ENCODE measurements at regions of chr1 and their contacts with region 1.

Region 1: DNA sequence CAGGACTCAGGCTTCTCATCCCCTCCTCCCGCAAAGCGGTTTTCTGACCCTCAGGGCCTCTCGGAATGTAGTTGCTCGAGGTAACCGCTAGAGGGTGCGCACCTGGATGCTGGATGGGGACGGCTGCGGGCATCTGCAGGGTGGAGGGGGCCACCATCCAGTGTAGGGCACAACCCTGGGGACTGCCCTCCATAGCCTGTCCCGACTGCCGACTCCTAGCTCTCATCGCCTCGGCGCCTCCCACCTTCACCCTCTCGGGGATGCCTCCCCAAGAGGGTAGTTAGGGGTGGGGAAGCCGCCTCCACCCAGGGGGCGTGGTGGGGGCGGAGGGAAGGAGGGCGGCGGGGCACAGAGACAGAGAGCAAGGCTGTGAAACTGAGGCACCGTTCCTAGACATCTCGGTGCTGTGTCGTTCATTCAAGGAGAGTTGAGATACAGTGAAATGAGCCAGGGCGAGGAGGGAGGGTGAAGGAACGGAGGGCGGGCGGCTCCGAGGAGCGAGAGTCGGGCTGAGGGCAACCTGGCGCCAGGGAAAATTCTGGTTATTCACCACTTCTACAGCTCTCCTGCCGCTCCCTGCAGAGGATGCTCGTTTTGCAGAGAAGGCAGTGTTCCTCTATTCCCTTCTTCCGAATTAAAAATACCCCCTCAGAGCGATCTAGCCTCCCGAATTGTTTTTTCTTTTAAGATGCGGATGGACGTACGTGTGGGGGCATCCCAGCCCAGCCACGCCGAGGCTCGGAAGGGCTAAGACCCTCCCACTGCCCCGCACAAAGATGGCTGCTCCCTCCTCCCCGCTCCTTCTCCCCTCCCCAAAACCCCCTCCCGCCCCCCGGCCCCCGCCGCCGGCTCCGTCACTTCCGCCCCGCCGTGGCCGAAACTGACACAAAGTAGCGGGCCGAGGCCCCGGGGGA is at the start of gene ATP8B2:
- DNase-seq: peak; percentile 69 to 83
- ATAC-seq: peak; percentile 76 to 84 (median 81)
- H3K4me3 ChIP-seq: peak within 1 kb of the TSS; percentile 64
- H3K27ac ChIP-seq: peak within 1 kb of the TSS; percentile 54
- H3K4me1 ChIP-seq: peaks cover 22% of the 10 kb centered on the region
- H3K27me3 ChIP-seq: peaks cover 0 to 46% (median 6%) of the 10 kb centered on the region in 3 donors
- CTCF ChIP-seq: peak; percentile 84
- total RNA-seq, gene ATP8B2: 3.6 to 5.8 (median 4.0) TPM

Region 2: GRCh38 chr1:154386643-154387352 is 61.9 kb after region 1 on chr1:
- intact Hi-C with region 1: loop called in 1 of 2 experiments (anchors 5 kb)
- DNase-seq: no peak
- ATAC-seq: peak in 1 of 4 donors; percentile 16
- H3K4me3 ChIP-seq: no peak overlapping the region
- H3K27ac ChIP-seq: no peak overlapping the region
- H3K4me1 ChIP-seq: no peaks in the 10 kb centered on the region
- H3K27me3 ChIP-seq: peaks cover 0 to 3% (median 0%) of the 10 kb centered on the region in 3 donors
- CTCF ChIP-seq: no peak

Region 3: DNA sequence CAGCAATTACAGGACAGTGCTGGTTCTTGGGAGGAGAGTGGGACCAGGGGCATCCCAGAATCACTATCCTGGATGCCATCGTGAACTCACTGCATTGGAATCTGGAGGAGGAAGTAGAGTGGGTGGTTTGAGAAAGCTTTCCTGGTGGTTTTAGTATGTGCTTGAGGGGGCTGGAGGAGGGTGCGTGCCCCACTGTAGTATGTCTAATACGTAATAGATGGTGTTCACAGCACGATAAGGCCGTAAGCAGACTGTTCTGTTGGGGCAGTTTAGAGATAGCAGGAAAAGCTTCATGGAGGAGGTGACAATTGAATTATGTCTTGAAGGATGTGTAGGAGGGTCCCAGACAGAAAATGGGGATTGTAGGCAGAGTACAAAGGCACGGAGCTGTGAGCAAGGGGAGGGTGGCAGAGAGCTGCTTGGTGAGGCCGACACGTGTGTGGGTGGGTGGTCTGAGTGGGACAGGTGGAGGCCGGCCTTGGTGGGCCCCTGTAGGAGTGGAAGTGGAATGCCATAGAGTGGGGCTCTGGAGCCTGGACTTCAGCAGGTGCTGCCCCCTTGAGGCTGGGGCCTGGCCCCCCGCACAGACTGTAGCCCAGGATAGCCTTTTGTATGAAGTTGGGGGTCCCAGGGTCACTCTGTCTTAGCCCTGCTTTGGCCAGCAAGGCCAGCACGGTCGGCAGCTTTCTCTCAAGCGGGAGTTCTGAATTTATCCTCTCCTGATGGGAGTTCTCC is 117.2 kb after region 1 on chr1:
- intact Hi-C with region 1: loop called in 1 of 2 experiments (anchors 10 kb)
- DNase-seq: no peak
- ATAC-seq: peak; percentile 30 to 39 (median 36)
- H3K4me3 ChIP-seq: no peak overlapping the region
- H3K27ac ChIP-seq: no peak overlapping the region
- H3K4me1 ChIP-seq: peaks cover 28% of the 10 kb centered on the region
- H3K27me3 ChIP-seq: no peaks in the 10 kb centered on the region
- CTCF ChIP-seq: peak; percentile 30

Region 4: GRCh38 chr1:154546264-154547063 is 221.5 kb after region 1 on chr1:
- intact Hi-C with region 1: loop called in 1 of 2 experiments (anchors 10 kb)
- DNase-seq: peak; percentile 44 to 57
- ATAC-seq: peak; percentile 76 to 89 (median 86)
- H3K4me3 ChIP-seq: no peak overlapping the region
- H3K27ac ChIP-seq: no peak overlapping the region
- H3K4me1 ChIP-seq: no peaks in the 10 kb centered on the region
- H3K27me3 ChIP-seq: peaks cover 0 to 3% (median 0%) of the 10 kb centered on the region in 3 donors
- CTCF ChIP-seq: peak; percentile 82

Region 5: DNA sequence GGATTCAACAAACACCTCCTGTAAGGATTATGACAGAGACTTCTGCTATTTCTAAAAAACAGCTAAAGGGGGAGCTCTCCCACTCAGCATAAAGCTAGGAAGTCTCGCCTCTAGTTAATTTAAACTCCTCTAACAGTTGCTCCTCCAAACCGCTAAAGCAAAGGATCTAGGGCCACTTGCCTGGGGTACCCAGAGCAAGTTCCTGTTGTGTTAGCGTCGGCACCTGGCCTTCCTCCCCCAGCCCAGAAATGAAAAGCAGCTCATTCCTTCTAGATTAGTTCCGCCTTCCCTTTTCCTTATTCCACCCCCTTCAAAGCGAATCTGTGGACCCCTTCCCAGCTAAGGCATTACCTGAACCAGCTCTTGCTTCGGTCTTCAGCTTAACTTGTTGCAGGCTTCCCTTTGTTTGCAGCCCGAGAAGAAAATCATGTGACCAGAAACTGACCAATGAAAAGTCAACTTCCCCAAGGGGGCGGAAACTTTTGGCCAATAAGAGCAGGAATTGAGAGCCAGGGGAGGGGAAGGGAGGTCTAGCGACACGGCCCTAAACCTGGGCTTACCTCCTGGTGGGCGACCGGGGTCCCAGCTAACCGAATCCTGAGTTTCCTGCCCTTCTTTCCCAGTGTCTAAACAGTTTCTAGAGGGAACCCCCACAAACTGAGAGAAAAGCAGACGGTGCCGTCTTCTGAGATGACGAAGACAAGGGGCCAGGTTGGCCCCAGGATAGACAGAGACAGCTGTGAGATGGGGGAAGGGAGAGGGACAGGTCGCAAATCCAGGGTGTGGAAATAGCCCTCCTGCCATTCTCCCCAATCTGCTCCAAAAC is 631.0 kb after region 1 on chr1 and contains the start of gene PBXIP1:
- intact Hi-C with region 1: no loop called
- DNase-seq: peak; percentile 54 to 75
- ATAC-seq: peak; percentile 87 to 91 (median 88)
- H3K4me3 ChIP-seq: peak within 1 kb of the TSS; percentile 71
- H3K27ac ChIP-seq: peak within 1 kb of the TSS; percentile 88
- H3K4me1 ChIP-seq: peaks cover 54% of the 10 kb centered on the region
- H3K27me3 ChIP-seq: no peaks in the 10 kb centered on the region
- CTCF ChIP-seq: no peak
- total RNA-seq, gene PBXIP1: 76.5 to 149 (median 104) TPM